Dorsolateral prefrontal cortex (tissue), 120 donors: ENCODE measurements at regions of chr7 and their contacts with region 1.

Region 1: DNA sequence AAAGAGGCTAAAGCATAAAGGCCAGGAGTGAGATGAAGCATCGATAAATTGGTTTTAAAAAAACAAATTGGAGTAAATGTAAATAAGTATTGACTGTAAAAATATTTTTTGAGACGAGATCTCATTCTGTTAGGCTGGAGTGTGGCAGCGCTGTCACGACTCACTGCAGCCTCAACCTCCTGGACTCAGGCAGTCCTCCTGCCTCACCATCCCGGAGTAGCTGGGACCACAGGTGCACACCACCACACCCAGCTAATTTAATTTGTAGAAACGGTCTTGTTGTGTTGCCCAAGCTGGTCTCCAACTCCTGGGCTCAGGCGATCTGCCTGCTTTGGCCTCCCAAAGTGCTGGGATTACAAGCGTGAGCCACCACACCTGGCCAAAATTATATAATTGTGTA is 17.8 kb downstream of the HNRNPA2B1 start:
- DNase-seq: no peak
- H3K4me3 ChIP-seq: no peak overlapping the region
- H3K27ac ChIP-seq: peak overlapping the region in 8 of 59 donors; percentile 2 to 43 (median 17)
- H3K27me3 ChIP-seq: no peaks in the 10 kb centered on the region
- CTCF ChIP-seq: no peak

Region 2: DNA sequence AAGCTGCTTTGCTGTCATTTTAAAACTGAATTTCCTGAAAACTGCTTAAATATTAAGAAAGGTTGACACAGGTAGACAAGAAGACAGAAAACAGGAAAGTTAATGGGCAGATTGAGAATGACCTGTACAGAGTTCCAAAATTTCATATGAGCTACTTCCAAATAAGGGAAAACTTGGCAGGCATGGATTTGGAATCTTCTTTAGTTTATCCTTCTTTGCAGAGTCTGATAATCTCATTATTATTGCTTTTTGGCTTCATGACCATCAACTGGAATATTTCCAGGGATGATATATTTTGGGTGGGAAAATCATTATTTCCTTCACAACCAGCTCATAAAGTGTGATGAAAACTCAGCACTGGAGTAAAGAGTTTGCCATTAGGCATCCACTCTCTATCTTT is 607.9 kb before region 1 on chr7:
- intact Hi-C with region 1: no loop called
- DNase-seq: no peak
- H3K4me3 ChIP-seq: no peak overlapping the region
- H3K27ac ChIP-seq: no peak overlapping the region
- H3K27me3 ChIP-seq: peaks cover 0 to 3% (median 0%) of the 10 kb centered on the region in 45 donors
- CTCF ChIP-seq: no peak

Region 3: GRCh38 chr7:26090927-26091519 is 91.7 kb before region 1 on chr7:
- intact Hi-C with region 1: loop called in 1 of 2 experiments (anchors 5 kb)
- DNase-seq: peak in 1 of 10 donors; percentile 26
- H3K4me3 ChIP-seq: peak overlapping the region in 34 of 59 donors; percentile 0 to 48 (median 24)
- H3K27ac ChIP-seq: no peak overlapping the region
- H3K27me3 ChIP-seq: no peaks in the 10 kb centered on the region
- CTCF ChIP-seq: peak; percentile 53 to 93 (median 75)

Region 4: DNA sequence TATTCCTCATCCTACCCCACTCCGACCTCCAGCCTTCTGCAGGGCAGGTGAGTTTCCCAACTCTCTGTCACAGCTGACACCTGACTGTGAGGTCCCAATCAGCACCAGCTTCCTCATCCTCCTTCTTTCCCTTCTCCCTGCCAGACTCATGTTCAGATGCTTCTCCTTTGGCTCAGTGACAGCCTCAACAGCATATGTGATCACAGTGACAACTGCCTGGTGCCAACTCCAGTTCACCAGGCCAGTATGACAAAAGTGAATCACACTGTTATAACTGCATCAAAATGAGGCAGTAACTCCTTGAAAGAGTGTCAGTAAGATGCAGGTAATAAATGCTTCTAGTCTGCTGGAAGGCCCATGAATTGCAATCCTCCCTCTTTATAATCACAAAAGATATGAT is 77.5 kb before region 1 on chr7:
- intact Hi-C with region 1: no loop called
- DNase-seq: peak in 1 of 10 donors; percentile 52
- H3K4me3 ChIP-seq: no peak overlapping the region
- H3K27ac ChIP-seq: no peak overlapping the region
- H3K27me3 ChIP-seq: peaks cover 0 to 10% (median 0%) of the 10 kb centered on the region in 45 donors
- CTCF ChIP-seq: no peak